CD8-positive, alpha-beta memory T cell (primary cell): ENCODE measurements at regions of chr2 and their contacts with region 1.

Region 1: DNA sequence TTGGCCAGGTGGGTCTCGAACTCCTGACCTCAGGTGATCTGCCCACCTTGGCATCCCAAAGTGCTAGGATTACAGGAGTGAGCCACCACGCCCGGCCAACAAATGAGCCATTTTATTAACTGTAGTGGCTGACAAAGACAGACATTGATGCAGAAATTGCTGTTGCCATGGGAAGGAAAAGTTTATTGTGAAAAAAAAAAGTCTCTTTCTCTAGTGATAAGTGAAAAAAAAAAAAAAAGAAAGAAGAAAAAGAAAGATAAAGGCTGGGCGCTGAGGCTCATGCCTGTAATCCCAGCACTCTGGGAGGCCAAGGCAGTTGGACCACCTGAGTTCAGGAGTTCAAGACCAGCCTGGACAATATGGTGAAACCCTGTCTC is 39.8 kb upstream of the RAB1A start:
- DNase-seq: no peak
- H3K4me3 ChIP-seq: no peak overlapping the region
- H3K4me3 Mint-ChIP-seq: no peak overlapping the region
- H3K27ac ChIP-seq: no peak overlapping the region
- H3K27ac Mint-ChIP-seq: no peak overlapping the region
- H3K4me1 ChIP-seq: no peaks in the 10 kb centered on the region
- H3K4me1 Mint-ChIP-seq: no peaks in the 10 kb centered on the region
- H3K27me3 ChIP-seq: no peaks in the 10 kb centered on the region
- H3K27me3 Mint-ChIP-seq: peaks cover 0 to 8% of the 10 kb centered on the region in 2 donors

Region 2: GRCh38 chr2:64797881-64798575 is 371.7 kb before region 1 on chr2:
- CTCF ChIA-PET with region 1: no interaction called
- POLR2A ChIA-PET with region 1: no interaction called
- DNase-seq: no peak
- H3K4me3 ChIP-seq: no peak overlapping the region
- H3K4me3 Mint-ChIP-seq: no peak overlapping the region
- H3K27ac ChIP-seq: no peak overlapping the region
- H3K27ac Mint-ChIP-seq: no peak overlapping the region
- H3K4me1 ChIP-seq: peaks cover 6% of the 10 kb centered on the region
- H3K4me1 Mint-ChIP-seq: no peaks in the 10 kb centered on the region
- H3K27me3 ChIP-seq: no peaks in the 10 kb centered on the region
- H3K27me3 Mint-ChIP-seq: peaks cover 5 to 9% of the 10 kb centered on the region in 2 donors

Region 3: GRCh38 chr2:65031341-65032018 is 138.3 kb before region 1 on chr2:
- CTCF ChIA-PET with region 1: no interaction called
- POLR2A ChIA-PET with region 1: no interaction called
- DNase-seq: peak in 1 of 5 donors; percentile 24
- H3K4me3 ChIP-seq: peak overlapping the region; percentile 22
- H3K4me3 Mint-ChIP-seq: peak overlapping the region in 5 of 7 donors; percentile 18 to 70 (median 66)
- H3K27ac ChIP-seq: no peak overlapping the region
- H3K27ac Mint-ChIP-seq: peak overlapping the region in 7 of 8 donors; percentile 13 to 88 (median 49)
- H3K4me1 ChIP-seq: peaks cover 26% of the 10 kb centered on the region
- H3K4me1 Mint-ChIP-seq: peaks cover 21 to 25% (median 23%) of the 10 kb centered on the region in 3 donors
- H3K27me3 ChIP-seq: no peaks in the 10 kb centered on the region
- H3K27me3 Mint-ChIP-seq: no peaks in the 10 kb centered on the region

Region 4: GRCh38 chr2:65064728-65065552 is 104.8 kb before region 1 on chr2:
- CTCF ChIA-PET with region 1: interaction called, 15 read pairs
- POLR2A ChIA-PET with region 1: no interaction called
- DNase-seq: peak in 3 of 5 donors; percentile 45 to 59 (median 57)
- H3K4me3 ChIP-seq: no peak overlapping the region
- H3K4me3 Mint-ChIP-seq: peak overlapping the region in 1 of 7 donors; percentile 51
- H3K27ac ChIP-seq: peak overlapping the region; percentile 68
- H3K27ac Mint-ChIP-seq: peak overlapping the region in 3 of 8 donors; percentile 73 to 93 (median 79)
- H3K4me1 ChIP-seq: peaks cover 20% of the 10 kb centered on the region
- H3K4me1 Mint-ChIP-seq: peaks cover 35 to 63% (median 55%) of the 10 kb centered on the region in 3 donors
- H3K27me3 ChIP-seq: no peaks in the 10 kb centered on the region
- H3K27me3 Mint-ChIP-seq: no peaks in the 10 kb centered on the region

Region 5: DNA sequence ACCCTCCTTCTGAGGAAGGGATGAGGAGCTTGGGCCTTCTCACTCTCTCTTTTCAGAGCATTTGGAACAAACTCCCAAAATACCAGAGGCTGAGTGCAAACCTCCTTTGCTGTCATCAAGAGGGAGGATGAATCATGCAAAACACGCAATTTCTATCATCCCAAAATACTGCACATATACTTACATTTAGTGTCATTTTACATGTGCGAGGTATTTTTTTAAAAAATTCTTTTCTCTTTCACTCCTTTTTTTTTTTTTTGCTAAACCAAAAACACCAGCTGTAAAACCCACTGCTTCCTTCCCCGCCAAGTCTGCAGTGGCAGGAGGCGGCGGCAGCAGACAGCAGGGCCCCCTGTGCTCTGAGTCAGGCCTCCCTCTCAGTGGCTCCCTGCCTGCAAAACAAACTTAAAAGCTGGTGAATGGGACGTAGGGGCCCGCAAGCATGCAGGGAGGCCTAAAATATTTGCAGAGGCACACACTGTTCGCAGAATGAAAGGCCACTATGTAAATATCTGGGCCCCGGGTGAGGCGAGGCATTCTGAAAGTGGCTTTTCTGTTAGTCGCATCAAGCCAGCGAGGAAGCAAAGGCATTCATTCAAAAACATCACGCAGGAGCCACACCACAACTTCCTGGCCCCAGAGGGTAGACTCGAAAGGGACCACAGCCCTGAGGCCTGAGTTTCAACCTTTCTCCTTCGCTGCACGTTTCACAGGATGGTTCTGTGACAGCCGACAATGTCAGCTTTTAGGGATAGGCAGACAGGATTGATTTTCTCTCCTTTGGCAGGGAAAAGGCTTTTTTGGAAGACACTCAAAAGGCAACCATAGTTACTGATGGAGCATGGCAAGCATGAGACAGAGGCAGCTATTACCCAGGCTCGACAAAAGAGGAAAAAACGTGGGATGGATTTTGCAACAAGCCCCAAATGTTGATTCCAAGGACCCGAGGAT is 131.3 kb after region 1 on chr2:
- CTCF ChIA-PET with region 1: no interaction called
- POLR2A ChIA-PET with region 1: no interaction called
- DNase-seq: peak; percentile 46 to 84 (median 76)
- H3K4me3 ChIP-seq: peak overlapping the region; percentile 53
- H3K4me3 Mint-ChIP-seq: peak overlapping the region; percentile 80 to 91 (median 82)
- H3K27ac ChIP-seq: peak overlapping the region; percentile 28
- H3K27ac Mint-ChIP-seq: peak overlapping the region; percentile 52 to 95 (median 86)
- H3K4me1 ChIP-seq: peaks cover 37% of the 10 kb centered on the region
- H3K4me1 Mint-ChIP-seq: peaks cover 32 to 40% (median 36%) of the 10 kb centered on the region in 3 donors
- H3K27me3 ChIP-seq: no peaks in the 10 kb centered on the region
- H3K27me3 Mint-ChIP-seq: peaks cover 4 to 10% of the 10 kb centered on the region in 2 donors

Region 6: GRCh38 chr2:66105066-66105753 is 935.5 kb after region 1 on chr2:
- CTCF ChIA-PET with region 1: no interaction called
- POLR2A ChIA-PET with region 1: no interaction called
- DNase-seq: no peak
- H3K4me3 ChIP-seq: no peak overlapping the region
- H3K4me3 Mint-ChIP-seq: no peak overlapping the region
- H3K27ac ChIP-seq: no peak overlapping the region
- H3K27ac Mint-ChIP-seq: no peak overlapping the region
- H3K4me1 ChIP-seq: no peaks in the 10 kb centered on the region
- H3K4me1 Mint-ChIP-seq: no peaks in the 10 kb centered on the region
- H3K27me3 ChIP-seq: no peaks in the 10 kb centered on the region
- H3K27me3 Mint-ChIP-seq: no peaks in the 10 kb centered on the region